ENCODE measurements at regions of chr7 and their contacts with region 1.

Region 1: DNA sequence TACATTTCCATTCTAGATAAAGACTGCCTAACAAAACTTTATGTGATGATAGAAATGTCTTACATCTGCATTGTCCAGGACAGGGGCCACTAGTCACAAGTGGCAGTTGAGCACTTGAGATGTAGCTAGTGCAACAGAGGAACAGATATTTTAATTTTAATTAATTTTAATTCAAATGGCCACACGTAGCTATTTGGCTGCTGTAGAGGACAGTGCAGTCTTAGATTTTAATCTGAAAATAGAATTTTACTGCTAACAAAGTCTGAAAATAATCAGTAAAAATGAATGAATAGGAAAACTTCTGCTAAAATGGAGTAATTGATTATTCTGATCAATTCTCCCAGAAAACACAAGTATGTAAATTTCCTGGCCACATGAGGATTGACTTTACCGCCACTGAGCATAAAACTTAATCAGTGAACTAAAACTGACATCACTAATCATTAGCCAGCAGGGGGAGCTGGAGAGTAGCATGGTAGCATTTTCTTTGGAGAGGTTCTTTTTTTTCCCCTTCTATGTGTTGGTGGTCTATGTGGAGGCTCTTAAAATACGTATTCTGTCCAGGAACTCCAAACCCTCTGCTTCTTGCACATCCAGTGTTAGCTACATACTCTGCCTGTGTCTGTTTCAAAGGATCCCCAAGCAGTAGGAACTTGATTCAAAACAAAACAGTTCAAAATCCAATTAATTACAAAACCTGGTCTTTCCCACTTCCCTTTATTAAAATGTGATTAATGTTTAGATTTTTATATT is 52.1 kb downstream of the TSPAN12 start:
- DNase-seq: peak; percentile 59
- H3K4me3 ChIP-seq: no peak overlapping the region; a peak in 1 of 4 replicates
- H3K27ac ChIP-seq: no peak overlapping the region
- H3K4me1 ChIP-seq: no peaks in the 10 kb centered on the region
- H3K27me3 ChIP-seq: peaks cover 9% of the 10 kb centered on the region; the same call in 1 of the 2 replicates
- CTCF ChIP-seq: peak; percentile 99
- EP300 ChIP-seq: no peak
- RAD21 ChIP-seq: peak; percentile 83

Region 2: DNA sequence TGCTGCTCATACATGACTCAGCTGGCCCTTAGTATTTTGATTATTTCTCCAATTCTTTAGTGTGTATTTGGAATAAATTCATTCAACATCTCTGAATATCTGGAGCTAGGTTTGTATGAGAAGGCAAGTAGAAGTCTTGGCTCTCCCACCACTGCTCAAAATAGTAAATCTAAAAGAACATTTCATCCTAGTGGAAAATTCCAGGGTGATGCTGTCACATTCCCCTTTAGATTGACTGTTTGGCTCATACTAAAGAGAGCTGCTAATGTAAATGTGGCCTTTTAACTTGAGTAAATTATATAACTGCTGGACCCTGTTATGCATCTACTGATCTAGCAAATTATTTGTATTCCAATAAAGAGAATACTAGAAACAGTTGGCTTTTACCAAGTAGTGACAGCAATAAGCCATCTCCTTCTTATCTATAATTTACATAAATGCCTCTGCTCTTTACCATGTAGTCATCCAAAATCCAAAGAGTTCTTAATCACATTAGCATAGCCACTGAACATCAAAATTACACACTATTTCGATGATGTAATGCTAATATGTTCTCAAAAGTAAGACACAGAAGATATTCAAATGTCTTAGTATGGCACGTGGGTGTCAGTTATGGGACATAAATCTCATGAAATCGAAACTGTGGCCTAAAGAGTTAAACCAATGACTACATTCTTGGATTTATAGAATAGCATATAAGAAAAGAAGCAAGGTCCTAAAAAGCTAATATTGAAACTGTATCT is 619.7 kb before region 1 on chr7:
- CTCF ChIA-PET with region 1: no interaction called
- POLR2A ChIA-PET with region 1: no interaction called
- DNase-seq: no peak
- H3K4me3 ChIP-seq: peak overlapping the region in 1 of 2 experiments; percentile 4; a peak in 1 of 4 replicates
- H3K27ac ChIP-seq: no peak overlapping the region
- H3K4me1 ChIP-seq: no peaks in the 10 kb centered on the region
- H3K27me3 ChIP-seq: no peaks in the 10 kb centered on the region
- CTCF ChIP-seq: no peak
- EP300 ChIP-seq: no peak
- RAD21 ChIP-seq: no peak

Region 3: DNA sequence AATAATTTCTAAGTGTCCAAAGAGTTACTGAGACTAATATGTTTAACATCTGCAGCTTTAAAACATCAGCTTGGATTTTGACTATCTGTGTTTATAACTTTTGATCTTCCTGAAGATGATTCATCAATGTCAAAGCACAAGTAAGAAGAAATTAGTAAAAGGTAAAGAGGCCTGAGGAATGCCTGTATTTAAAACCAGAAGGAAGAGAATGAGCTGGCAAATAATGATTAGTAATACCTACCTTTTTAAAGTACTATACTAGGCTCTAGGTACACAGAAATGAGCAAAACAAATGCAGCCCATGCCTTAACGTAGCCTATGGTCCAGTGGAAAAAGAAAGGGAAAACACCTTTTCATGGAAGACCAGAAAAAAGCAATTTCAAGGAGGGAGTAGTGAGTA is 374.8 kb before region 1 on chr7:
- CTCF ChIA-PET with region 1: no interaction called
- POLR2A ChIA-PET with region 1: no interaction called
- DNase-seq: no peak
- H3K4me3 ChIP-seq: no peak overlapping the region
- H3K27ac ChIP-seq: no peak overlapping the region
- H3K4me1 ChIP-seq: no peaks in the 10 kb centered on the region
- H3K27me3 ChIP-seq: no peaks in the 10 kb centered on the region
- CTCF ChIP-seq: no peak
- EP300 ChIP-seq: no peak
- RAD21 ChIP-seq: no peak

Region 4: GRCh38 chr7:120785095-120785494 is 20.7 kb before region 1 on chr7:
- CTCF ChIA-PET with region 1: interaction called, 14 read pairs
- POLR2A ChIA-PET with region 1: no interaction called
- DNase-seq: no peak
- H3K4me3 ChIP-seq: no peak overlapping the region
- H3K27ac ChIP-seq: no peak overlapping the region
- H3K4me1 ChIP-seq: no peaks in the 10 kb centered on the region
- H3K27me3 ChIP-seq: peaks cover 24% of the 10 kb centered on the region; the same call in 1 of the 2 replicates
- CTCF ChIP-seq: no peak
- EP300 ChIP-seq: no peak
- RAD21 ChIP-seq: no peak

Region 5: DNA sequence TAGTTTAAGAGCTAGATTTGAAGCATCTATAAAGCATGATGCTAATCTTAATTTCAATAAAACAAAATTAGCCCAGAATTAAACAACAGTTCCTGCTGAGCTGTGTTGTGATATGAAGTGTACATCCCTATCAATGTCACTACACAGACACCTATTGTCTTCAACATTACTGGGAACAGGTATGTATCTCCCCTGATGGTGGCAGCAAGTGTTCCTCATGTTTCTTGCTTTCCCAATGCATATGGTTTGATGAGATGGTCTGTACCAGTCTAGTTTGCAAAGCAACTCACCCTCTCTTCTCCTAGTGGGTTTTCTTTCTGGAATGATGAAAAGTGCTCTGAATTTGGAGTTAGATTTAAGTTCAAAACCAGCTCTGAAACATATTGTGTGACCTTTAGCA is 14.1 kb after region 1 on chr7:
- CTCF ChIA-PET with region 1: interaction called, 26 read pairs
- POLR2A ChIA-PET with region 1: no interaction called
- DNase-seq: no peak
- H3K4me3 ChIP-seq: no peak overlapping the region
- H3K27ac ChIP-seq: no peak overlapping the region
- H3K4me1 ChIP-seq: no peaks in the 10 kb centered on the region
- H3K27me3 ChIP-seq: peaks cover 6% of the 10 kb centered on the region; the same call in 1 of the 2 replicates
- CTCF ChIP-seq: no peak
- EP300 ChIP-seq: no peak
- RAD21 ChIP-seq: no peak

Region 6: GRCh38 chr7:120833546-120833945 is 27.7 kb after region 1 on chr7:
- CTCF ChIA-PET with region 1: interaction called, 18 read pairs
- POLR2A ChIA-PET with region 1: no interaction called
- DNase-seq: no peak
- H3K4me3 ChIP-seq: no peak overlapping the region
- H3K27ac ChIP-seq: no peak overlapping the region
- H3K4me1 ChIP-seq: no peaks in the 10 kb centered on the region
- H3K27me3 ChIP-seq: no peaks in the 10 kb centered on the region
- CTCF ChIP-seq: no peak
- EP300 ChIP-seq: no peak
- RAD21 ChIP-seq: no peak

Region 7: DNA sequence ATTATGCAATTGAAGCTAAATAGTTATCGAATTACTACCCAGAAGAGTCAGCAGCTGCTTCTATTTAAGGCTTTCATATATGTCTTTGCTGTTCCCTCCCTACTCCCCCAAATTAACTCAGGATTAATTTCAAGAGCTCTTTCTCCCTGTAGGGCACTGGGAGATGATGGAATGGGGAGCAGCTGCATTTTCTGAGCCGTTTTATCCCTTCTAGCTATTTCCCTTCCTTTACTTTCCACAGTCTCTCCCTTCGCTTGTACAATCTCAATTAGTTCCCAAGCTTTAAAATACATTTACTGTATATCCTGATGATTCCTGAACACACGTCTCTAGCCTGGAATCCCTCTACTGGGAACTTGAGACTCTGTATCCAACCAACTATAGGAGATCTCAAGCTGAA is 71.9 kb after region 1 on chr7:
- CTCF ChIA-PET with region 1: interaction called, 10 read pairs
- POLR2A ChIA-PET with region 1: no interaction called
- DNase-seq: no peak
- H3K4me3 ChIP-seq: no peak overlapping the region
- H3K27ac ChIP-seq: no peak overlapping the region
- H3K4me1 ChIP-seq: no peaks in the 10 kb centered on the region
- H3K27me3 ChIP-seq: peaks cover 22% of the 10 kb centered on the region; the same call in 1 of the 2 replicates
- CTCF ChIP-seq: no peak
- EP300 ChIP-seq: no peak
- RAD21 ChIP-seq: no peak

Region 8: DNA sequence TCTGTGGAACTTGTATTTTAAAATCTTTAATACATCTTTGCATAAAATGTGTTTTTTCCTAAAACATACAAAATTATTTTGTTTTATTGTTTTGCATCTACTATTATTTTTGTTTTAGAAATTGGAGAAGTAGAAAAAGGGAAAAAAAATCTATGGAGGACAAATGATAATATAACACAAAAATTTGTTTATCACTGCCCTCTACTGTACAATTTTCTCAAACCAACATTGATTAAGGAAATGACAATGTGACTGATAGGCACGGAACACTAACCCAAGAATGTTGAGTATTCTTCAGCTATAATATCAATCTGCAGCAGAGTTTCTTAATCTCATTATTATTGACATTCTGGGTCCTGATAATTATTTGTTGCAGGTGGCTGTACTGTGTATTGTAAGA is 135.3 kb after region 1 on chr7:
- CTCF ChIA-PET with region 1: interaction called, 24 read pairs
- POLR2A ChIA-PET with region 1: no interaction called
- DNase-seq: no peak
- H3K4me3 ChIP-seq: no peak overlapping the region
- H3K27ac ChIP-seq: no peak overlapping the region
- H3K4me1 ChIP-seq: no peaks in the 10 kb centered on the region; a peak in 1 of 4 replicates
- H3K27me3 ChIP-seq: peaks cover 11% of the 10 kb centered on the region; the same call in 1 of the 2 replicates
- CTCF ChIP-seq: peak; percentile 56
- EP300 ChIP-seq: no peak
- RAD21 ChIP-seq: peak; percentile 65

Region 9: DNA sequence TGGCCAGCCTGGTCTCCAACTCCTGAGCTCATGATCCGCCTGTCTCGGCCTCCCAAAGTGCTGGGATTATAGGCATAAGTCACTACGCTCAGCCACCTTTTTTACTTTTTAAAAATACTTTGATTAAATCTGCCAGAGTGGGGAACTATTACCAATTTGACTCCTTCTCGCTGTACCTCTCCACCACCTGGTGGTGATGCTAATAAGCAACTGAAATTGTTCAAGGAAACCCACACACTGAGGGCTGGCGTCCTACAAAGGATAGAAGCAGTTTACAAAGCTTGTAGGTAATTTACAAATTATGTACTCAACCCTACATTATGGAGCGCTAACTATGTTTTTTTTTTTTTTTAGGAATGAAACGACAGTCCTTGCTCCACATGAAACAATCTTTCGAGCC is 293.8 kb after region 1 on chr7:
- CTCF ChIA-PET with region 1: interaction called, 15 read pairs
- POLR2A ChIA-PET with region 1: no interaction called
- DNase-seq: no peak
- H3K4me3 ChIP-seq: no peak overlapping the region
- H3K27ac ChIP-seq: no peak overlapping the region
- H3K4me1 ChIP-seq: peaks cover 0 to 3% of the 10 kb centered on the region in 2 experiments; a peak in 2 of 4 replicates
- H3K27me3 ChIP-seq: no peaks in the 10 kb centered on the region
- CTCF ChIP-seq: peak; percentile 34; the same call in 1 of the 2 replicates
- EP300 ChIP-seq: no peak
- RAD21 ChIP-seq: peak; percentile 12; the same call in 1 of the 2 replicates

Region 10: DNA sequence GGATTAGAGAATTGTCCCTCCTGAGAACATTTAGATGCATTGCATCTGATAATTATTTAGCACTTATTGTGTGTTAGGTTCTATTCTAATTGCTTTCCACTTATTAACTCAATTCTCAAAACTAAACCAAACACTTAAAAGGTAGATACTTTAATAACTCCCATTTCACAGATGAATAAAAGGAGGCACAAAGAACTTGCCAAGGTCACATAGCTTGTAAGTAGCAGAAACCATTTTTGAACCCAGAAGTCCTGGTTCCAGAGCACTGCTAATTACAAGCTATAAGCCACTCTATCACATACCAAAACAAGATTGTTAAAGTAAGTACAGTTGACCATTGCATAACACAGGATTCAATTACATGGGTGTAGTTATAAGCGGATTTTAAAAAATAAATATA is 347.6 kb after region 1 on chr7:
- CTCF ChIA-PET with region 1: no interaction called
- POLR2A ChIA-PET with region 1: no interaction called
- DNase-seq: no peak
- H3K4me3 ChIP-seq: no peak overlapping the region
- H3K27ac ChIP-seq: no peak overlapping the region
- H3K4me1 ChIP-seq: peaks cover 0 to 3% of the 10 kb centered on the region in 2 experiments; a peak in 2 of 4 replicates
- H3K27me3 ChIP-seq: no peaks in the 10 kb centered on the region
- CTCF ChIP-seq: no peak
- EP300 ChIP-seq: no peak
- RAD21 ChIP-seq: no peak

Measured in SK-N-SH (cell line).